ENCODE measurements at regions of chr6 and their contacts with region 1.

Region 1: GRCh38 chr6:149565527-149566409 is at the start of gene GINM1:
- DNase-seq: peak; percentile 84 to 92
- ATAC-seq: peak; percentile 90 to 93
- H3K4me3 ChIP-seq: peak within 1 kb of the TSS; percentile 90 to 97 (median 95)
- H3K27ac ChIP-seq: peak within 1 kb of the TSS; percentile 89 to 96 (median 94)
- H3K4me1 ChIP-seq: peaks cover 14 to 22% of the 10 kb centered on the region in 2 donors
- H3K27me3 ChIP-seq: no peaks in the 10 kb centered on the region
- CTCF ChIP-seq: peak; percentile 58 to 76 (median 66)
- POLR2A ChIP-seq: no peak
- total RNA-seq, gene GINM1: 28.9 to 39.4 (median 33.1) TPM

Region 2: GRCh38 chr6:149545754-149546528 is 19.8 kb before region 1 on chr6 and contains the start of gene PPIL4:
- in situ Hi-C with region 1: no loop called
- intact Hi-C with region 1: loop called (anchors 1 kb)
- DNase-seq: peak; percentile 92 to 95
- ATAC-seq: peak; percentile 95 to 96
- H3K4me3 ChIP-seq: peak within 1 kb of the TSS; percentile 79 to 100 (median 97)
- H3K27ac ChIP-seq: peak within 1 kb of the TSS; percentile 87 to 100 (median 98)
- H3K4me1 ChIP-seq: peaks cover 22 to 31% of the 10 kb centered on the region in 2 donors
- H3K27me3 ChIP-seq: no peaks in the 10 kb centered on the region
- CTCF ChIP-seq: peak; percentile 78 to 90 (median 83)
- POLR2A ChIP-seq: peak; percentile 83 to 88
- total RNA-seq, gene PPIL4: 14.9 to 26.2 (median 18.5) TPM

Region 3: GRCh38 chr6:149600508-149600907 is 34.7 kb after region 1 on chr6:
- in situ Hi-C with region 1: no loop called
- intact Hi-C with region 1: no loop called
- DNase-seq: no peak
- ATAC-seq: no peak
- H3K4me3 ChIP-seq: no peak overlapping the region
- H3K27ac ChIP-seq: no peak overlapping the region
- H3K4me1 ChIP-seq: no peaks in the 10 kb centered on the region
- H3K27me3 ChIP-seq: no peaks in the 10 kb centered on the region
- CTCF ChIP-seq: no peak
- POLR2A ChIP-seq: no peak

Region 4: DNA sequence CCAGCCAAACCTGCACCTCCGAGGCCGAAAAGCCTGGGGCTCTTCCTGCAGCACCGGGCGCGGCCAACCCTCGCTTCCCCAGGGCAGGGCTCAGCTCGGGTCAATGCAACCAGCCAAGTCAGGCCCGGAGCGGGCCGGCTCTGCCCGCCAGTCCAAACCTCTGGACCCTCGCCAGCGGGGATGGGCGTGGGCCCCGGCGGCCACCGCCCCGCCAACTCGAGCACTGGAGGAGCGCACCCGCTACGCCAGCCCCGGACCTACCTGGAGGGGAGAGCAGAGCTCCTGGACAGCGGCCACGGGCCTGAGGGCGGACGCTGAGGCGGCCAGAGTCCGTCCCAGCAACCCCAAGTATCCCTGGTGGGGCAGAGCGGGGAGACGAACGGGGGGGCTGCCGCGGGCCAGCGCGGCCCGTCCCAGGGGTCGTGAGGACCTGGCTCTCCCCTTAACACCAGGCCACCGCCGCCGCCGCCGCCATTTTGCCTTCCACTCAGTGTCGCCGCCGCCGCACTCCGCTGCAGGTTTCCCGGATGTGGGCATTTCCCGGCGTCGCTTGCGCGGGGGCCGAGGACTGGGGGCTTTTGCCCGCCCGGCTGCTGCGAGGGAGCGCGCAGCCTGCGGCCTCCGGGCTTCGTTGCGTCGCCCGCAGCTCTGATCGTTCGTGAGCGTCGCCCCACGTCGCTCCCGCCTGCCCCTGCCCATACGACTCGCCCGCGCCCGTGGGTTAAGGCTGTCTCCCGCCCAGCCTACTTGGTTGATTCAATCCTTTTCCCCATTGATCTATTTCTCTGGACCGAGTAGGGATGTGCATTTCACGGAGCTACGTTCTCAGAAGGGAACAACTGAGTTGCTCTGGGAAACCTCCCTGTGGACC is 152.1 kb after region 1 on chr6 and contains the start of gene LATS1:
- in situ Hi-C with region 1: no loop called
- intact Hi-C with region 1: loop called (anchors 2 kb)
- DNase-seq: peak; percentile 76 to 84
- ATAC-seq: peak; percentile 93
- H3K4me3 ChIP-seq: peak within 1 kb of the TSS; percentile 77 to 96 (median 92)
- H3K27ac ChIP-seq: peak within 1 kb of the TSS; percentile 95 to 98 (median 97)
- H3K4me1 ChIP-seq: peaks cover 26 to 33% of the 10 kb centered on the region in 2 donors
- H3K27me3 ChIP-seq: no peaks in the 10 kb centered on the region
- CTCF ChIP-seq: no peak
- POLR2A ChIP-seq: peak; percentile 61 to 71
- total RNA-seq, gene LATS1: 6.3 to 21.8 (median 14.4) TPM

Region 5: DNA sequence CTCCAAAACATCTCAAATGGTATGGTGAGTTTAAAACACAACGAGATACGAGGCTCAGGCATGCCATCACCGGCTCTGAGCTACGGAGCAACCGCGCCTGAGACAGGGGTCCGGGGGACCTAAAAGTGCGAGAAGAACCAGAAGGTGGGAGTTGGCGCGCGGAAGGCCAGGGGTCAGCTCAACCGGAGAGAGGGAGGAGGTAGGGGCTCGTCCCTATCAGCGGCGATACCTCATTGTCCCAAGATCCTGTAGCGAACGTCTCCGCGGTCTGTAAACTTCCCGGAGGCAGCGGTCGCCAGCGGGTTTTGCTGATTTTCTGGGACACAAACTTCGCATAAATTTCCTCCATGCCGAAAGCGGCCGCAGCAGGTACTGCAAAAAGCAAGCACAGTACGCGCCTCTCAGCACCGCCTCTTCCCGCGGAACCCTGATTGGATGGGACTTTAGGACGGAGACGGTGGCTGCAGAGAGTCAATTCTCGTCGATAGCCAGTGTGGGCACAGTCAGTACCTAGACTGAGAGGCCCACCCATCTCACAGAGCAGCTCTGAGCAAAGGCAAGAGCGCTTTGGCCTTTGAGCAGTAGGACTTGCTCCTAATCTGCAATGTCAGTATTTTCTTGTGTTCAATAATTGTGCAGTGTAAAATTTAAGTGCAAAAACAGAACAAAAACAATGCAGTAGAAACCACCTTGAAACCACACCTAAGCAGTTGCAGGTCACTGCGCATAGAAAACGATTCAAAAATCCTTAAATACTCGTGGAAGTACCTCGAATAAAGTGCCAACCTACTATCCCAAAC is 180.6 kb after region 1 on chr6 and contains the start of gene NUP43:
- in situ Hi-C with region 1: no loop called
- intact Hi-C with region 1: loop called (anchors 5 kb)
- DNase-seq: peak; percentile 84 to 93
- ATAC-seq: peak; percentile 48 to 67
- H3K4me3 ChIP-seq: peak within 1 kb of the TSS; percentile 66 to 93 (median 72)
- H3K27ac ChIP-seq: peak within 1 kb of the TSS; percentile 74 to 86 (median 80)
- H3K4me1 ChIP-seq: peaks cover 16 to 24% of the 10 kb centered on the region in 2 donors
- H3K27me3 ChIP-seq: no peaks in the 10 kb centered on the region
- CTCF ChIP-seq: peak; percentile 70 to 82 (median 77)
- POLR2A ChIP-seq: peak in 1 of 2 donors; percentile 14
- total RNA-seq, gene NUP43: 15.0 to 42.0 (median 16.7) TPM

Measured in gastrocnemius medialis (tissue), 4 donors.